Calu3 (cell line): ENCODE measurements at regions of chr4 and their contacts with region 1.

Region 1: DNA sequence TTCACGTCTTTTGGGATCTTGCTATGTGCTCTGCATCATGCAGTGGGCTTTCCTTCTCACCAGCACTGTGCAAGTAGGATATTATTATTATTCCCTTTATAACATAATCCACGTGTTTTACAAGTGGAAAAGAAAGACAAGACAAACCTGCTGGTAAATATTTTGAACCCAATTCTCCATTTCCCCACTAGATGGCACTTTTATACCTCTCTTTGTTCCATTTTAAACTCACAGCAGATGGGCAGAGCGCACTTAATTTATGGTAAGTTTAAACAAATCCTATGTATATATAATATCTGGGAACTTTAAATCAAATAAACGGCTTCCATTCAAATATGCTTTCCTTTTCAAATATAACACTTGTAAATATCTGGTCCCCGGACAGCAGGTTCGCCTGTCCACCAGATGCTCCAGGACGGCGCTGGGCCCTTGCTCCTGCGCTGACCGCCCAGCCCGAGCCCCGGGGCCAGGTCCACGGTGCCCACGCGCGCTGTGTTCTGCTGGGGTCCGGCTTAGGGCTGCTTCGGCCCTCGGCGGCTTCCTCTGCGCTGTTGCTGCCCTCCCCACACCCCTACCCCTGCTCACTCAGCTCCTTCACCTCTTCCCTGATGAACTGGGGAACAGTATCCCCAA is 31.1 kb downstream of the F11 start:
- DNase-seq: peak; percentile 22
- H3K4me3 Mint-ChIP-seq: no peak overlapping the region
- H3K27ac Mint-ChIP-seq: no peak overlapping the region
- H3K4me1 Mint-ChIP-seq: no peaks in the 10 kb centered on the region
- H3K27me3 Mint-ChIP-seq: no peaks in the 10 kb centered on the region
- CTCF ChIP-seq: peak; percentile 18

Region 2: DNA sequence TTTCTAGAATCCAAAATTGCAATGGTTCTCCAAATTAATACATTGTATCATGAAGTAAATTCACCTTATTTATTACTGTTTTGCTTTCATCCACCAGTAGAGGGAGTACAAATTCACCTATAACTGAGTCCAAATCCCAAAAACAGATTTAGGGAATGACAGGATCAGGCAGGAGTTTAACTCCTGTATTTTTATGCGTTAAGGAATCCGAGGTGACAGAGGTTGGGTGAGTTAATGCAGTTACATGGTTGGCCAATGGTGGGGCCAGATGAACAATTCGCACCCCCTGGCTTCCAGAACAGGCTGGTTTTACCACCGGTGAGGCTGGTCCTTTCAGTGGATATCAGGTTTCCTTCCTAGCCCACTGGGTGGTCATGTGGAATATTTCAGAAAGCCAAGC is 175.8 kb after region 1 on chr4:
- CTCF ChIA-PET with region 1: no interaction called
- intact Hi-C with region 1: loop called (anchors 2 kb)
- DNase-seq: no peak
- H3K4me3 Mint-ChIP-seq: no peak overlapping the region
- H3K27ac Mint-ChIP-seq: no peak overlapping the region
- H3K4me1 Mint-ChIP-seq: no peaks in the 10 kb centered on the region
- H3K27me3 Mint-ChIP-seq: peaks cover 13% of the 10 kb centered on the region
- CTCF ChIP-seq: peak; percentile 30

Region 3: DNA sequence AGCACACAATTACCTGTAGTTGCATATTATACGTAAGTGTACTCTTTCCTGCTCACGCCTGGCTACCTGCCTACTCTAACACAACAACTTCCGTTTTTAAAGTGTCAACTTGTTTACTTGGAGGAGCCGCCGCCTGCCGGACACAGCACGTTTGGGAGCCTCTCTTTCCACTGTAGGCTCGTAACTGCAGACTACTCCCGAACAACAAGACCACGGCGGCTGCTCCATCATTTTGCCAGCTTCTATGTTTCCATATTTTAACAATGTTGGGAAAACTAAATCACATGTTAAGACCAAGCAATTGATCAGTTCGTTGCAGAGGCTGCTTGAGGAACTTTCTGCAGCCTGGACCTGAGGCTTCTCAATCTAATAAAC is 257.4 kb after region 1 on chr4:
- CTCF ChIA-PET with region 1: no interaction called
- intact Hi-C with region 1: loop called (anchors 10 kb)
- DNase-seq: peak; percentile 42
- H3K4me3 Mint-ChIP-seq: peak overlapping the region; percentile 76
- H3K27ac Mint-ChIP-seq: peak overlapping the region; percentile 36
- H3K4me1 Mint-ChIP-seq: no peaks in the 10 kb centered on the region
- H3K27me3 Mint-ChIP-seq: no peaks in the 10 kb centered on the region
- CTCF ChIP-seq: no peak

Region 4: DNA sequence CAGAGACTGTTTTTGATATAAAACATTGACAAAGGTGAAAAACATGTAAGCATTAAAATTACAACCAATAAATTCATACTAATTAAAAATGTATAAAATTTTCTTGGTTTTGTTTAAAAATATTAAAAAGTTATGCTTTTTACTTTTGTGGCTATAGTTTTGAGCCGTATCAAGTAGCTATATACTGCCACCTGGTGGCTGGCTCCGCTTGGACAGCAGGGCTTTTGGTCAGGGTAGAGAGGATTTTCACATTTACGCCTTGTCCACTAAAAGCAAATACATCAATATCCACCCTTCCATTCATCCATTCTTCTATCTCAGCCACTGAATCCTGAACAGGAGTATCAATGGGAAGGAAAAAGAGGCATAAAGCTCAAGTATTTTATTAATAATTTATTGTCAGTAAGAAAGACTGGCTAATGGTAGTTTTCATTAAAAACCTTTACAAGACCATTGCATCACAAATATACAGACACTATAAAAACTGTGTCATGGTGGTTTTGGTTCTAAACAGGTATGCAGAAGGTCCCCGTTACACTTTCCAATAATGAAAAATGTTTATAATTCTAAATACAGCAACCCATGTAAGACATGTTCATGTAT is 290.4 kb after region 1 on chr4:
- CTCF ChIA-PET with region 1: no interaction called
- intact Hi-C with region 1: loop called (anchors 1 kb)
- DNase-seq: peak; percentile 70
- H3K4me3 Mint-ChIP-seq: no peak overlapping the region
- H3K27ac Mint-ChIP-seq: no peak overlapping the region
- H3K4me1 Mint-ChIP-seq: no peaks in the 10 kb centered on the region
- H3K27me3 Mint-ChIP-seq: no peaks in the 10 kb centered on the region
- CTCF ChIP-seq: peak; percentile 63

Region 5: DNA sequence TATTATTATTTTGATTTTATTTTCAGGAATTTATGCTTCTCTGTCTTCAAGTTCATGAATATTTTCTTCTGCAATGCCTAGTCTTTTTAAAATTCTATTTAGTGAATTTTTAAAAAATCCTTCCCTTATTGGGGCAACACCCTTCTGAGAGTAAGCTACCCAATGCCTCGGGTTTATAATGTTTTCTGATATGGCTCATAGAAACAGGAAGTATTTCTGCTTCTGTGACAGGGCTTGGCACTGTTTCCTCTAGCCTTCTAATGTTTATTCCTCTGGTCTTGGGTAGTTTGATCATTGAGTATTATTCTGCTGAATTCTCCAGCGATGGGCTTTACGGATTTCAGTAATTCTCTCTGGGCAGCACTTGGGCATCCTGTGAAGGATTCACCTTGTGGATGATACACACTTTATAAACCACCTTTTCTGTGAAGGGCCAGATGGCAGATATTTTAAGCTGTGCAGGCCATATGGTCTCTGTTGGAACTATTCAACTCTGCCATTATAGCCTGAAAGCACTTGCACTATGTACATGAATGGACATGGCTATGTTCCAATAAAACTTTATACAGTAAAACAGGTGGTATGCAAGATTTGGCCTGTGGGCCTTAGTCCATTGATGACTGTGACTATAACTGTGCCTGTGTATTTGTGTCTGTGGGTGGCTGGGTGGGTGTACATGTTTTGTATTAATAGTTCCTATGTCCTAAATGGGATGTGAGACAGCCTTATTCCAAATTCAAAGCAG is 522.4 kb after region 1 on chr4:
- CTCF ChIA-PET with region 1: no interaction called
- intact Hi-C with region 1: no loop called
- DNase-seq: no peak
- H3K4me3 Mint-ChIP-seq: no peak overlapping the region
- H3K27ac Mint-ChIP-seq: no peak overlapping the region
- H3K4me1 Mint-ChIP-seq: peaks cover 12% of the 10 kb centered on the region
- H3K27me3 Mint-ChIP-seq: no peaks in the 10 kb centered on the region
- CTCF ChIP-seq: no peak